ENCODE measurements at regions of chr9 and their contacts with region 1.

Region 1: DNA sequence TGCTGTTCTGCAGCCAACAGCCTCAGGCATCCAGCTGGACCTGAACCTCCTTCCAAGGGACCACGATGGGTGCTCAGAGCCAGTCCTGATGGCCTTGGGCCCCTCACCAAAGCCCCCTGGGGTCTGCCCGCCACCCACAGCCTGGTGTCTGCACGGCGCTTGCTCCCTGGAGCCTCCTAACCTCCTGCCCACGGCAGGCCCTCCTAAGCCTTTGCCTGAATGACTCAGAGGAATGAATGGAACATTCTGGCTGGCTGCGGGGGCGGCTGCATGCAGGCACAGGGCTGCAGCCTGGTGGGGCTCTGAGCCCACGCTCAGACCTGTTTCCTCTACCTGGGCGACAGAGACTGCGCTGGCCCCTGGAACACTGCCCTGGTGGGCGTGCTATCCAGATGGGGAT is 6.9 kb downstream of the SOHLH1 start:
- DNase-seq: no peak
- H3K4me3 ChIP-seq: no peak overlapping the region
- H3K4me1 ChIP-seq: no peaks in the 10 kb centered on the region
- H3K27me3 ChIP-seq: peaks cover 4% of the 10 kb centered on the region

Region 2: GRCh38 chr9:135743546-135744332 is 51.3 kb after region 1 on chr9:
- in situ Hi-C with region 1: no loop called
- DNase-seq: no peak
- H3K4me3 ChIP-seq: no peak overlapping the region
- H3K4me1 ChIP-seq: no peaks in the 10 kb centered on the region
- H3K27me3 ChIP-seq: peaks cover 41% of the 10 kb centered on the region

Region 3: GRCh38 chr9:135797507-135798262 is 105.3 kb after region 1 on chr9:
- in situ Hi-C with region 1: loop called (anchors 25 kb)
- DNase-seq: peak; percentile 30 to 80
- H3K4me3 ChIP-seq: no peak overlapping the region
- H3K4me1 ChIP-seq: no peaks in the 10 kb centered on the region
- H3K27me3 ChIP-seq: peaks cover 13% of the 10 kb centered on the region